Endothelial cell of umbilical vein (primary cell): ENCODE measurements at regions of chr6 and their contacts with region 1.

Region 1: DNA sequence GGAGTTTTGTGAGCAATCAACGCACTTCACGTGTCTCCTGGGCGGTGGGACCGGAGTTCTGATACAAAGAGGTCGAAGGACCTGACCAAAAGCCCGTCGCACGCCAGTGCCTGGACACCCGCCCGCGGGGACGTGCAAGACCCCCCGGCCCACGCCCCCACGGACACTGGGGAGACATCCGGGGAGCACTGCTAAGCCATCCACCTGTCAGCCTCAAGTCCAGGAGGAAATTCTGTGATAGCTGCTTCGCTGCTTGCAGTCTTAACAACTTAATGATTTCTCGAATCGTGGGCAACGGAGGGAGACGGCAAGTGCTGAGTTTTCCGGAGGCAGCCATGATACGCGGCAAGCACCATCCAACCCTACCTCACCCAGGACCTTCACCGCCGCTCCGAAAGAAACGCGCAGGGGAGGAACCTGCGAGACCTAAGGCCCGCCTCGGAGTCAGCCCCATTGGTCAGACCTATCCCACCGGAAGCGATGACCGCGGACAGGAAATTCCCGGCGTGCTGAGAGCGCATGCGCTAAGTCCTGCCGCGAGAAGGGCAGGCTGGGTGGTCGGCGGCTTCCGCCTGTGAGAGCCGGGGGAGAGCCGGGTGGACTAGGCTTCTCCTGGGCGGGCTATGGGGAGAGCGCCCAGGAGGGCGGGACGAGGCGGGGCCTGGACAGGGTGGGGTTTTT is at the start of gene TFB1M:
- DNase-seq: peak; percentile 99
- H3K4me3 ChIP-seq: peak within 1 kb of the TSS; percentile 60 to 100 (median 97)
- H3K27ac ChIP-seq: peak within 1 kb of the TSS; percentile 90
- H3K4me1 ChIP-seq: peaks cover 46% of the 10 kb centered on the region
- H3K27me3 ChIP-seq: no peaks in the 10 kb centered on the region
- CTCF ChIP-seq: no peak
- POLR2A ChIP-seq: peak; percentile 85
- total RNA-seq, gene TFB1M: 30.2 and 35.5 TPM in 2 replicates

Region 2: DNA sequence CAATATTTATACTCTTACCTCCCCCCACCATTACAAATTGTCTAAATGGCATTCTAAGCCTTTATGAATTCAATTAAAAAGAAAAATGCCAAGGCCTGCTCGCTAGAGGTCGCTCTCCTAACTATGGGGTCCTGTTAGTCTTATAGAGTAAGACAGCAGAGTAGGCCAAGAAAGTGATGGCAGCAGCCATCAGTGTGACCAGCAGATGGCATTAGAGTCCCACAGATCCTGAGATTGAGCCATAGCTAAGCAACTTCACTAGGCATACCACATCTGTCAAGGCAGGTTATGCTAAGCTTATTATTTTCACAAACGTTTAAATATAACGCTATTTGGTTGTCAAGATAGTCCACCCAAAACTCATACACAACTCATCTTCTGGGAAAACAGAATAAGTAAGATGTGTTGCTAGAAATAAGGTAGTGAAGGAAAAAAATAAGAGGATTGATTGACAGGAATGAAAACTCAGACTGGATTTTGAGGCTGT is 638.6 kb before region 1 on chr6:
- CTCF ChIA-PET with region 1: interaction called, 11 read pairs
- POLR2A ChIA-PET with region 1: no interaction called
- dilution Hi-C with region 1: no loop called
- intact Hi-C with region 1: loop called (anchors 5 kb)
- DNase-seq: peak; percentile 99
- H3K4me3 ChIP-seq: no peak overlapping the region
- H3K27ac ChIP-seq: no peak overlapping the region
- H3K4me1 ChIP-seq: no peaks in the 10 kb centered on the region
- H3K27me3 ChIP-seq: no peaks in the 10 kb centered on the region
- CTCF ChIP-seq: peak; percentile 94 to 99
- POLR2A ChIP-seq: peak; percentile 21

Region 3: DNA sequence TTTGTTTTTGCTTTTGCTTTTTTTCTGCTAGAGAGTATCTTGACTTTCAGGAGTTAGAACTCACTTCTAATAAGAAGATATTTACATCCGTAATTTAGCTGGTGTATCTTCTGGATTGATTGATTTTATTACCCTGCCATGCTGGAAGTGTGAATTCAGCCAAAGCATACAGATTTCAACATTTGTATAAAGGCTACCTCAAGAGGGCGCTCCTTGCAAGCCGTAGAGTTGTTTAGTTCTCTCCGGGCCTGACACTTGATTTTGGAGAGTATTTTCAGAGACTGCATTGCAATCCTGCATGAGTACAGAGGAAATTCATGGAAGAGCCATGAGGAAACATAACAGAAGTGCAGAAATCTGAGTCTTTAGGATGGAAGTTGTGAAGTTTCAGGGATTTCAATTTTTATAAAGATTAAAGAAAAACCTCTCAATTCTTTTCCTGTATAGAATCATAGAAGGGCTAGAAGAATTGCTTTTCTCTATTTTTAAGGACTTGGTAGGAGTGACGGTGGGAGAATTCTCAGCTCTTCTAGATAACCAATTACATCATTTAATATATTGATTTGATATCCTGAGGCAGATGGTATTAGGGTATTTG is 385.8 kb before region 1 on chr6:
- CTCF ChIA-PET with region 1: interaction called, 9 read pairs
- POLR2A ChIA-PET with region 1: no interaction called
- dilution Hi-C with region 1: no loop called
- intact Hi-C with region 1: loop called (anchors 1 kb)
- DNase-seq: peak; percentile 76
- H3K4me3 ChIP-seq: no peak overlapping the region
- H3K27ac ChIP-seq: no peak overlapping the region
- H3K4me1 ChIP-seq: peaks cover 13% of the 10 kb centered on the region
- H3K27me3 ChIP-seq: no peaks in the 10 kb centered on the region
- CTCF ChIP-seq: peak; percentile 65 to 73
- POLR2A ChIP-seq: no peak

Region 4: DNA sequence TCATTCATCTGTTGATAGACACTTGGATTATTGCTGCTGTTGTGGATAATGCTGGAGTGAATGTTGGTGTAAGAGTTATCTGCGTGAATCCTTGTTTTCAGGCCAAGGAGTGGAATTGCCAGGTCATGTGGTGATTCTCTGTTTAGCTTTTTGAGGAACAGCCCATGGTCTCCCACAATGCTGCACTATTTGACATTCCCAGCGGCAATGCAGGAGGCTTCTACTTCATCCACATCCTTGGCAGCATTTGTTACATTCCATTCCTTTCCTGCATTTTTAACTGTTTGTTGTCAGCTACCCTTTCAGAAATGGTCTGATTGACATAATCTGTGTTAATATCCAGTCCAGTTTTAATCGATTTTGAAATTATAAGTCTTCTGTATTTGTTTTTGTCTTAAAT is 102.1 kb before region 1 on chr6:
- CTCF ChIA-PET with region 1: no interaction called
- POLR2A ChIA-PET with region 1: no interaction called
- dilution Hi-C with region 1: no loop called
- intact Hi-C with region 1: no loop called
- DNase-seq: no peak
- H3K4me3 ChIP-seq: no peak overlapping the region
- H3K27ac ChIP-seq: no peak overlapping the region
- H3K4me1 ChIP-seq: no peaks in the 10 kb centered on the region
- H3K27me3 ChIP-seq: no peaks in the 10 kb centered on the region
- CTCF ChIP-seq: no peak
- POLR2A ChIP-seq: no peak

Region 5: DNA sequence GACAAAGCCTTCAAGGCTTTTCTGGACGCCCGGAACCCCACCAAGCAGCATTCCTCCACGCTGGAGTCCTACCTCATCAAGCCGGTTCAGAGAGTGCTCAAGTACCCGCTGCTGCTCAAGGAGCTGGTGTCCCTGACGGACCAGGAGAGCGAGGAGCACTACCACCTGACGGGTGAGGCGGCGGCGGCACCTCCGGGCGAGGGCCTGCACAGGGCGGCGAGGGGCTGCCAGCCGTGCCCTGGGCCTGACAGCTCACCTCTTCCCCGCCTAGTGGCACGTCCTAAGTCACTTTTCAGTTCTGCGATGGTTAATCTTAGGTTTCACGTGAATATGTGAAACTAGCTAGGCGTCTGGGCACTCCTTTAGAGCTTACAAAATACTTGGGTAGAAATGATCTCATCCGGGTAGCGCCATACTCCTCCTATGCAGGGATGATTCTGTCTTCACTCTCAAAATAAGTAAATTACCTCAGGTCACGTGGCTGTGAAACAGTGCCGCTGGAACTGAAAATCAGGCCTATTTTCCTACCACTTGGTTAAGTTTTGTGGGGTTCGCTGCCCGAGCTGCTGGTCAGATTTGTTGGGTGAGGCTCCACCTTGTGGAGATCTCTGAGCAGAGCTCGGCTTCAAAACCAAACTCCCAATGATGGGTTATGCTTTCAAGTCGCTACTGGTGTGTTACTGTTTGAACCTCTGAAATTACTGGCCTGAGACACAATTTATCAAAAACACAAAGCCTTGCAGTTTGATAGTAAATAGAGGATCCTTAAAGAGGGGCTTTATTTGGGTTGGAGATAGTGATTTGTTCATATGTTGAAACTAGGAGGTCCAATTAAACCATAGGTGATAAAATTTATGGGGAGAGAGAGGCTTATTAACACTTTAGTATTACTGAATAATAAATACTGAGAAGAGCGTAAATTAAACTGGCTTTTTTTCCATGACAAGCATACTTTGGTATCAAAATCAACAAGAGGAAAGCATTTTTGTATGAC is 65.9 kb before region 1 on chr6:
- CTCF ChIA-PET with region 1: interaction called, 8 read pairs
- POLR2A ChIA-PET with region 1: no interaction called
- dilution Hi-C with region 1: no loop called
- intact Hi-C with region 1: loop called (anchors 2 kb)
- DNase-seq: peak; percentile 75
- H3K4me3 ChIP-seq: no peak overlapping the region
- H3K27ac ChIP-seq: no peak overlapping the region
- H3K4me1 ChIP-seq: no peaks in the 10 kb centered on the region
- H3K27me3 ChIP-seq: no peaks in the 10 kb centered on the region
- CTCF ChIP-seq: peak; percentile 71 to 74
- POLR2A ChIP-seq: no peak

Region 6: GRCh38 chr6:155493694-155494143 is 179.5 kb after region 1 on chr6:
- CTCF ChIA-PET with region 1: no interaction called
- POLR2A ChIA-PET with region 1: no interaction called
- dilution Hi-C with region 1: no loop called
- intact Hi-C with region 1: loop called (anchors 1 kb)
- DNase-seq: peak; percentile 96
- H3K4me3 ChIP-seq: peak overlapping the region in 1 of 3 experiments; percentile 6
- H3K27ac ChIP-seq: peak overlapping the region; percentile 96
- H3K4me1 ChIP-seq: peaks cover 26% of the 10 kb centered on the region
- H3K27me3 ChIP-seq: no peaks in the 10 kb centered on the region
- CTCF ChIP-seq: no peak
- POLR2A ChIP-seq: peak; percentile 64

Region 7: DNA sequence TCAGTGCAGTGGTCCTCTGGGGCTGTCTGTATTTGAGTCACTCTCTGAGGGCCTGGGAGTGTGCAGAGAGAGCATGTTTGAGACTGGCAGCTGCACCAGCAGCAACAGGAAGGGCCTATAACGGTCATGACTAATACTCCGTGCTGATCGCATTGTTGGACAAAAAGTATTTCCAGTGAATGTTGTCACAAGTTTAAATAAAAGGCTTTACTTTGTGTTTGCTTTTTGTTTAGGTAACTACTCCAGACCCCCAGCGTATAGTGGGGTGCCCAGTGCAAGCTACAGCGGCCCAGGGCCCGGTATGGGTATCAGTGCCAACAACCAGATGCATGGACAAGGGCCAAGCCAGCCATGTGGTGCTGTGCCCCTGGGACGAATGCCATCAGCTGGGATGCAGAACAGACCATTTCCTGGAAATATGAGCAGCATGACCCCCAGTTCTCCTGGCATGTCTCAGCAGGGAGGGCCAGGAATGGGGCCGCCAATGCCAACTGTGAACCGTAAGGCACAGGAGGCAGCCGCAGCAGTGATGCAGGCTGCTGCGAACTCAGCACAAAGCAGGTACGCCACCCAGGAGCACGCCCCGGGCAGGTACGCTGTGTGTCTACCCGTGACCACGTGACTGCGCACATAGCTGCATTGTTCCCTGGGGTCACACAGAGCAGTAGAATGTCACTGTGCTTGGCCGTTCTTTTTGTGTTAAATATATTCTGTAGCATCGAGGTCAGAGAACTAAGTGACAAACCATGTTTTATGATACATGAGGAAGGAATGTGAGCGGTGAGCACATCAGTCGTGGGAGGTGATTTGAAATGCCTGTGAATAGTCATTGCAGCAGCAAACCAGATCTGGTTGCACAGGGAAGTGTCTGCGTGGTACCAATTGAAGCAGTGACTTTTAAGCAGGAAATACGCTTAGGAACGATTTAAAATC is 1834.4 kb after region 1 on chr6:
- CTCF ChIA-PET with region 1: no interaction called
- POLR2A ChIA-PET with region 1: no interaction called
- dilution Hi-C with region 1: no loop called
- intact Hi-C with region 1: loop called (anchors 5 kb)
- DNase-seq: peak; percentile 97
- H3K4me3 ChIP-seq: peak overlapping the region in 1 of 3 experiments; percentile 1
- H3K27ac ChIP-seq: peak overlapping the region; percentile 97
- H3K4me1 ChIP-seq: peaks cover 60% of the 10 kb centered on the region
- H3K27me3 ChIP-seq: no peaks in the 10 kb centered on the region
- CTCF ChIP-seq: no peak
- POLR2A ChIP-seq: no peak